ENCODE measurements at regions of chr4 and their contacts with region 1.

Region 1: GRCh38 chr4:22410645-22411247 is 105.1 kb downstream of the ADGRA3 start:
- H3K4me3 Mint-ChIP-seq: no peak overlapping the region
- H3K27ac Mint-ChIP-seq: no peak overlapping the region
- H3K4me1 Mint-ChIP-seq: no peaks in the 10 kb centered on the region
- H3K27me3 Mint-ChIP-seq: no peaks in the 10 kb centered on the region

Region 2: GRCh38 chr4:22253431-22253830 is 157.3 kb before region 1 on chr4:
- intact Hi-C with region 1: no loop called
- H3K4me3 Mint-ChIP-seq: no peak overlapping the region
- H3K27ac Mint-ChIP-seq: no peak overlapping the region
- H3K4me1 Mint-ChIP-seq: no peaks in the 10 kb centered on the region
- H3K27me3 Mint-ChIP-seq: no peaks in the 10 kb centered on the region

Region 3: GRCh38 chr4:22607382-22607781 is 196.6 kb after region 1 on chr4:
- intact Hi-C with region 1: loop called (anchors 1 kb)
- H3K4me3 Mint-ChIP-seq: no peak overlapping the region
- H3K27ac Mint-ChIP-seq: no peak overlapping the region
- H3K4me1 Mint-ChIP-seq: no peaks in the 10 kb centered on the region
- H3K27me3 Mint-ChIP-seq: no peaks in the 10 kb centered on the region

Measured in dendritic cell treated with granulocyte-macrophage colony-stimulating factor and Interleukin-4, amounts not matched to agents 40 ng/mL and 50 ng/mL, for 4 days (primary cell).